MCF 10A (cell line): ENCODE measurements at regions of chr7 and their contacts with region 1.

Region 1: DNA sequence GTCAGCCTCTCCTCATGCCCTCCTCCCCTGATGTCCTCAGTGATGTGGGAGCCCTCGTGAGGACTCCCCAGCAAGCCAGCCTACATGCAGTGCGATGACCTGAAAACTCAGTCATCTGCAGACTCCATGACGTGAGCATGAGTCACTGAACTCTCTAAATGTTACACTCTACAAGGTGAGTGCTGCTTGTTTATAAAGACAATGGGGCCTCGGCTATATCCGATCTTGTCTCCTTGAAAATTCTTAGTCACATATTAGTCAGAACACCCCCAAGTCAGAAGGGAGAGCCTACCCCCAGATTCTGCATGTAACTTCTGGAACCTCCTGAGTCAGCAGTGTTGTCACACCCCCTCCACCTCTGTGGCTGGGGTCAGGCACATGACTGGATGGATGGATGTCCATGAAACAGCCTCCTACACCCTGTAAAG is 673.8 kb downstream of the INHBA start:
- DNase-seq: peak; percentile 87
- H3K4me3 Mint-ChIP-seq: no peak overlapping the region
- H3K27ac Mint-ChIP-seq: peak overlapping the region; percentile 71
- H3K4me1 Mint-ChIP-seq: peaks cover 24% of the 10 kb centered on the region
- H3K27me3 Mint-ChIP-seq: no peaks in the 10 kb centered on the region
- CTCF ChIP-seq: no peak

Region 2: GRCh38 chr7:40833888-40834234 is 195.2 kb before region 1 on chr7:
- CTCF ChIA-PET with region 1: interaction called, 10 read pairs
- POLR2A ChIA-PET with region 1: no interaction called
- intact Hi-C with region 1: no loop called
- DNase-seq: no peak
- H3K4me3 Mint-ChIP-seq: no peak overlapping the region
- H3K27ac Mint-ChIP-seq: no peak overlapping the region
- H3K4me1 Mint-ChIP-seq: peaks cover 17% of the 10 kb centered on the region
- H3K27me3 Mint-ChIP-seq: no peaks in the 10 kb centered on the region
- CTCF ChIP-seq: peak; percentile 31

Region 3: GRCh38 chr7:40899151-40899550 is 129.9 kb before region 1 on chr7:
- CTCF ChIA-PET with region 1: interaction called, 10 read pairs
- POLR2A ChIA-PET with region 1: no interaction called
- intact Hi-C with region 1: no loop called
- DNase-seq: peak; percentile 46
- H3K4me3 Mint-ChIP-seq: no peak overlapping the region
- H3K27ac Mint-ChIP-seq: no peak overlapping the region
- H3K4me1 Mint-ChIP-seq: no peaks in the 10 kb centered on the region
- H3K27me3 Mint-ChIP-seq: no peaks in the 10 kb centered on the region
- CTCF ChIP-seq: no peak

Region 4: GRCh38 chr7:41224063-41224806 is 195.1 kb after region 1 on chr7:
- CTCF ChIA-PET with region 1: no interaction called
- POLR2A ChIA-PET with region 1: no interaction called
- intact Hi-C with region 1: loop called (anchors 10 kb)
- DNase-seq: peak; percentile 80
- H3K4me3 Mint-ChIP-seq: no peak overlapping the region
- H3K27ac Mint-ChIP-seq: no peak overlapping the region
- H3K4me1 Mint-ChIP-seq: peaks cover 15% of the 10 kb centered on the region
- H3K27me3 Mint-ChIP-seq: no peaks in the 10 kb centered on the region
- CTCF ChIP-seq: no peak